ENCODE measurements at regions of chr12 and their contacts with region 1.

Region 1: GRCh38 chr12:51424662-51425438 is at the start of gene SLC4A8:
- DNase-seq: peak; percentile 80 to 91 (median 90)
- H3K4me3 ChIP-seq: peak within 1 kb of the TSS; percentile 44 to 78 (median 57)
- H3K27ac ChIP-seq: no peak within 1 kb of the TSS
- H3K4me1 ChIP-seq: peaks cover 5 to 13% (median 11%) of the 10 kb centered on the region in 4 experiments
- H3K27me3 ChIP-seq: peaks cover 0 to 3% (median 0%) of the 10 kb centered on the region in 5 experiments

Region 2: GRCh38 chr12:51174501-51174900 is 250.3 kb before region 1 on chr12:
- CTCF ChIA-PET with region 1: no interaction called
- POLR2A ChIA-PET with region 1: no interaction called
- DNase-seq: no peak
- H3K4me3 ChIP-seq: no peak overlapping the region
- H3K27ac ChIP-seq: no peak overlapping the region
- H3K4me1 ChIP-seq: peaks cover 5 to 22% (median 12%) of the 10 kb centered on the region in 4 experiments
- H3K27me3 ChIP-seq: no peaks in the 10 kb centered on the region

Region 3: GRCh38 chr12:51351913-51352532 is 72.8 kb before region 1 on chr12:
- CTCF ChIA-PET with region 1: interaction called, 11 read pairs
- POLR2A ChIA-PET with region 1: interaction called, 3 read pairs
- DNase-seq: peak; percentile 50 to 74 (median 64)
- H3K4me3 ChIP-seq: no peak overlapping the region
- H3K27ac ChIP-seq: no peak overlapping the region
- H3K4me1 ChIP-seq: no peaks in the 10 kb centered on the region
- H3K27me3 ChIP-seq: no peaks in the 10 kb centered on the region

Region 4: DNA sequence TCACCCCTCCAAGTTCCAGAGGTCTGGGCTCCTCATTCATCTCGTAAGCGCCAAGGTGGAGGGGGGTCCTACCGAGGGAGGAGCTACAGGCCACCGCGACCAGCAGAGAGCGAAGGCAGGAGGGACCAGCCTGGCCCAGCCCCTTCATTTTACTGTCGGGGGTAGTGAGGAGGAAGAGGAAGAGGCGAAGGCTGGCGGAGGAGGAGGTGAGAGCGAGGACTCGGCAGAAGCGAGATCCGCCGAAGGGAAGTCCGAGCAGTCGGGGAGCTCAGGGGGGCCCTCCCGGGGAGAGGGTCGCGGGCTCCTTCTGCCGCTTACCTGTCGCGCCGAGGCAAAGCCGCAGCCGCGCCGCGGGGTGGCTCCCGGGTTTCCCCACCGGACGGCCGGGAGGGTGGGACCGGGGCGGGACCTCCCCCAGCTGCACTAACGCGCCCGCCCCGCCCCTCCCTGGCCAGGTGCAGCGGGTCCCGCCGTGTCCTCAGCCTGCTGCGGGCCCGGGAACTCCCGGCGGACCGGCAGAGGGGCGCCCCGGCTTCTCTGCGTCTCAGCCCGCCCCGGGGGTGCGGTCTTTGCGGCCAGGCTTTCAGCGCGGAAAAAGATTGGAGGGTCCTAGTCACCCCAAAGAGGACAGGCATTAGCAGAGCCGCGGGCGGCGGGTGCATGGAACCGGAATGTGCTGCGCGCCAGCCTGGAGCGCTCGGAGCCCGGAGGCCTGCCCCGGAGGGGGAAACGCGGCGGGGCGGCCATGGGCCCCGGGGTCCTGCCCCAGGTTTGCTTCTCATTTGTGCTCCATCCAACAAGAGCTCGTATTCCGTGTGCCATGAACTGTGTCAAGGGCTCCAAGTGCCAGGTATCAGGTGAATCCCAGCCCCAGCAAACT is 33.3 kb before region 1 on chr12 and contains the start of gene GALNT6:
- CTCF ChIA-PET with region 1: interaction called, 41 read pairs
- POLR2A ChIA-PET with region 1: no interaction called
- DNase-seq: peak; percentile 46 to 70 (median 56)
- H3K4me3 ChIP-seq: peak within 1 kb of the TSS; percentile 48 to 89 (median 77)
- H3K27ac ChIP-seq: peak within 1 kb of the TSS; percentile 54 to 73
- H3K4me1 ChIP-seq: peaks cover 21 to 85% (median 76%) of the 10 kb centered on the region in 4 experiments
- H3K27me3 ChIP-seq: no peaks in the 10 kb centered on the region

Region 5: GRCh38 chr12:51531978-51532497 is 107.2 kb after region 1 on chr12:
- CTCF ChIA-PET with region 1: interaction called, 118 read pairs
- POLR2A ChIA-PET with region 1: no interaction called
- DNase-seq: peak; percentile 77 to 89 (median 83)
- H3K4me3 ChIP-seq: peak overlapping the region in 1 of 7 experiments; percentile 23
- H3K27ac ChIP-seq: no peak overlapping the region
- H3K4me1 ChIP-seq: peaks cover 0 to 2% (median 0%) of the 10 kb centered on the region in 4 experiments
- H3K27me3 ChIP-seq: no peaks in the 10 kb centered on the region

Region 6: GRCh38 chr12:51823875-51824565 is 399.2 kb after region 1 on chr12:
- CTCF ChIA-PET with region 1: interaction called, 10 read pairs
- POLR2A ChIA-PET with region 1: no interaction called
- DNase-seq: peak; percentile 61 to 70 (median 66)
- H3K4me3 ChIP-seq: no peak overlapping the region
- H3K27ac ChIP-seq: no peak overlapping the region
- H3K4me1 ChIP-seq: peaks cover 4 to 50% (median 49%) of the 10 kb centered on the region in 4 experiments
- H3K27me3 ChIP-seq: no peaks in the 10 kb centered on the region

Measured in common myeloid progenitor, CD34-positive (primary cell).